ENCODE measurements at regions of chr1 and their contacts with region 1.

Region 1: DNA sequence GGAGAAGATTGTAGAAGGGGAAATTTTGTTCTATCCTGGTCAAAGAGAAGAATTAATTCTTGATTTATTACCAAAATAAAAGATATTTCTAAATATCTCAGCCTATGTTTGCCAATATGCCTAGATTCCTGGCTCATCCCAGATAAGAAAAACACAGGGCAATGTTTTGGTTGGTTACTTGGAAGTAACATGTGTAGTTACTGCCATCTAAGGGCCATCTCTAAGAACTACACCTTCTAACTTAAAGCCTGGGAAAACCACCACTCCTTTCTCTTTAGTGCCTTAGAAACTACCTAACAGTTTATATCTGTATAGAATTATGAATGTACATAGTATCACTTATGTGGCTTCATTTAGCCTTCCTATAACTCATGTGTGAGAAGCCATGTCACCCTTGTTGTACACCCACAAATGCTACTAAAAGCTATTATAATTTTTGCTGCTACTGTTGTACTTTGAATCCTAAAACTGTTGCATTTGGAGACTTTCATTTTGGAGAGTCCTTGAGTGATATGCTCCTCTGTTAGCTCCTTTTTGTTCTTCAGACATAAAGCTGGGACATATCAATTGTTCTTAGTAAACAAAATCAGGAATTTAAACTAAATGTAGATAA is 4.5 kb downstream of the AIM2 start:
- DNase-seq: peak; percentile 78
- H3K4me3 ChIP-seq: peak overlapping the region; percentile 68
- H3K27ac ChIP-seq: peak overlapping the region; percentile 68
- H3K4me1 ChIP-seq: peaks cover 77% of the 10 kb centered on the region
- CTCF ChIP-seq: peak; percentile 92

Region 2: GRCh38 chr1:158177700-158178450 is 894.2 kb before region 1 on chr1:
- CTCF ChIA-PET with region 1: no interaction called
- POLR2A ChIA-PET with region 1: interaction called, 3 read pairs
- intact Hi-C with region 1: loop called (anchors 2 kb)
- DNase-seq: peak; percentile 85
- H3K4me3 ChIP-seq: peak overlapping the region; percentile 68
- H3K27ac ChIP-seq: peak overlapping the region; percentile 86
- H3K4me1 ChIP-seq: peaks cover 69% of the 10 kb centered on the region
- CTCF ChIP-seq: no peak

Region 3: GRCh38 chr1:158285756-158286241 is 786.3 kb before region 1 on chr1:
- CTCF ChIA-PET with region 1: no interaction called
- POLR2A ChIA-PET with region 1: no interaction called
- intact Hi-C with region 1: loop called (anchors 2 kb)
- DNase-seq: peak; percentile 92
- H3K4me3 ChIP-seq: peak overlapping the region; percentile 61
- H3K27ac ChIP-seq: peak overlapping the region; percentile 89
- H3K4me1 ChIP-seq: peaks cover 78% of the 10 kb centered on the region
- CTCF ChIP-seq: no peak

Region 4: GRCh38 chr1:158564608-158565007 is 507.5 kb before region 1 on chr1:
- CTCF ChIA-PET with region 1: no interaction called
- POLR2A ChIA-PET with region 1: interaction called, 4 read pairs
- intact Hi-C with region 1: loop called (anchors 10 kb)
- DNase-seq: peak; percentile 78
- H3K4me3 ChIP-seq: peak overlapping the region; percentile 32
- H3K27ac ChIP-seq: peak overlapping the region; percentile 58
- H3K4me1 ChIP-seq: peaks cover 18% of the 10 kb centered on the region
- CTCF ChIP-seq: no peak

Region 5: GRCh38 chr1:158798531-158798930 is 273.5 kb before region 1 on chr1:
- CTCF ChIA-PET with region 1: no interaction called
- POLR2A ChIA-PET with region 1: no interaction called
- intact Hi-C with region 1: loop called (anchors 5 kb)
- DNase-seq: no peak
- H3K4me3 ChIP-seq: no peak overlapping the region
- H3K27ac ChIP-seq: no peak overlapping the region
- H3K4me1 ChIP-seq: no peaks in the 10 kb centered on the region
- CTCF ChIP-seq: peak; percentile 51; the same call in 1 of the 2 replicates

Region 6: GRCh38 chr1:158951956-158952355 is 120.1 kb before region 1 on chr1:
- CTCF ChIA-PET with region 1: no interaction called
- POLR2A ChIA-PET with region 1: no interaction called
- intact Hi-C with region 1: loop called (anchors 2 kb)
- DNase-seq: peak; percentile 97
- H3K4me3 ChIP-seq: peak overlapping the region; percentile 61
- H3K27ac ChIP-seq: peak overlapping the region; percentile 99
- H3K4me1 ChIP-seq: peaks cover 31% of the 10 kb centered on the region
- CTCF ChIP-seq: peak; percentile 52; the same call in 1 of the 2 replicates

Region 7: DNA sequence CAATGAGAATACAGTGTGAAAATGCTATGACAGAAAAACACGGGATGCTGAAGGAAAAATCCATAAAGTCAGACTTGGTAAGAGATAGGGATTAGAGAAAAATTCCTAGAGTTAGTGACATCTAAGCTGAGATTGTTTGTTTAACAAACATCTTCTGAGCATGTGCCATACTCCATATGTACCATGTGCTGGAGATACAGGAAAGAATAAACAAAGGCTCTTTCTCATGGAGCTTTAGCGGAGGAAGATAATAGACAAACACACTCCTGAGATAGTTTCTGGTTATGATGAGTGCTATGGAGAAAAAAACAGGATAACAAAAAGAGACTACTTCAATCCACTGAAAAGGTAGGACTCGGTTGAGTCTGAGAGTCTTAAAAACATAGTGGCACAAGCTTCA is 26.5 kb after region 1 on chr1:
- CTCF ChIA-PET with region 1: no interaction called
- POLR2A ChIA-PET with region 1: no interaction called
- intact Hi-C with region 1: no loop called
- DNase-seq: no peak
- H3K4me3 ChIP-seq: no peak overlapping the region
- H3K27ac ChIP-seq: no peak overlapping the region
- H3K4me1 ChIP-seq: no peaks in the 10 kb centered on the region
- CTCF ChIP-seq: no peak